Aorta (tissue), 5 donors: ENCODE measurements at regions of chr18 and their contacts with region 1.

Region 1: GRCh38 chr18:41150316-41150715 is 804.7 kb upstream of the PIK3C3 start:
- DNase-seq: no peak
- ATAC-seq: no peak
- H3K4me3 ChIP-seq: no peak overlapping the region
- H3K27ac ChIP-seq: no peak overlapping the region
- H3K4me1 ChIP-seq: no peaks in the 10 kb centered on the region
- H3K27me3 ChIP-seq: no peaks in the 10 kb centered on the region

Region 2: GRCh38 chr18:41034413-41034812 is 115.9 kb before region 1 on chr18:
- intact Hi-C with region 1: no loop called
- DNase-seq: no peak
- ATAC-seq: no peak
- H3K4me3 ChIP-seq: no peak overlapping the region
- H3K27ac ChIP-seq: no peak overlapping the region
- H3K4me1 ChIP-seq: no peaks in the 10 kb centered on the region
- H3K27me3 ChIP-seq: no peaks in the 10 kb centered on the region

Region 3: DNA sequence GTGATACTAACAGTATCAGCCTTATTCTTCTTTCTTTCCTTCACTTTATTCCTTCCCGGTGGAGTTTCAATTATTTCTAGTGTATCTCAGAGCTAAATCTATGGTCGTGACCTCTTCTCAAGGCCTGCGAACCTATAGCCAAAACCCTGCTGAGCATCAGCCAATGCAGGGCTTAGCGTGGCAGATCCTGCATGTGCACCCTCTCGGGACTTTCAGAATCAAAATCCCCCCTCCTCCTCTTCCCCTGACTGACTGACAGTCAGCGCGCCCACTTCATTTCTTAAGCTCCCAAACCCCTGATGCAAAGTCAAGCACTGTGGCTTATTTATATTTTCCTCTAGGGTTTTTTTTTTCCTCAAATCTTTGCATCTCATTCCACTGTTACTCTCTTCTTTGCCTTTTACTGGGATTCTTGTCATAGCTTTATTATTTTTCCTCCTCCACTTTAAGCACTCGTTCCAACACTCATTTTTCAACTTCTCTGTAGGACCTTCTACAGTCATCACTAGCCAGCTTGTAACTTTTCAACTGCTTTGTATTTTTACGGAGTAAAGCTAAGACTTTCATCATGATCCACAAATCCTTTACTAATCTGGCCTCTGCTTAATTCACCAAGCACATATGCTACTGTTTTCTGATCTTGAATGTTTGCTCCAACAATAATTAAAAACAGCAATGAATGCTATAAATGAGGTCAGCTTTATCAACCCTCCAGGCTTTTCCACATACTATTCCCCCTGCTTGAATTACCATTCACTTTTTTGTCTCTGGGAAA is 91.8 kb before region 1 on chr18:
- intact Hi-C with region 1: loop called in 1 of 2 experiments (anchors 10 kb)
- DNase-seq: no peak
- ATAC-seq: no peak
- H3K4me3 ChIP-seq: no peak overlapping the region
- H3K27ac ChIP-seq: no peak overlapping the region
- H3K4me1 ChIP-seq: no peaks in the 10 kb centered on the region
- H3K27me3 ChIP-seq: no peaks in the 10 kb centered on the region

Region 4: GRCh38 chr18:41244591-41245037 is 94.3 kb after region 1 on chr18:
- intact Hi-C with region 1: no loop called
- DNase-seq: no peak
- ATAC-seq: no peak
- H3K4me3 ChIP-seq: no peak overlapping the region
- H3K27ac ChIP-seq: no peak overlapping the region
- H3K4me1 ChIP-seq: no peaks in the 10 kb centered on the region
- H3K27me3 ChIP-seq: no peaks in the 10 kb centered on the region